ENCODE measurements at regions of chr10 and their contacts with region 1.

Region 1: GRCh38 chr10:84328418-84329195 is at the start of gene CCSER2:
- DNase-seq: peak; percentile 48 to 99
- H3K4me3 ChIP-seq: peak within 1 kb of the TSS; percentile 77
- H3K27ac ChIP-seq: peak within 1 kb of the TSS; percentile 51
- H3K4me1 ChIP-seq: peaks cover 15% of the 10 kb centered on the region
- H3K27me3 ChIP-seq: no peaks in the 10 kb centered on the region
- CTCF ChIP-seq: no peak
- total RNA-seq, gene CCSER2: 42.2 and 56.6 TPM in 2 replicates

Region 2: DNA sequence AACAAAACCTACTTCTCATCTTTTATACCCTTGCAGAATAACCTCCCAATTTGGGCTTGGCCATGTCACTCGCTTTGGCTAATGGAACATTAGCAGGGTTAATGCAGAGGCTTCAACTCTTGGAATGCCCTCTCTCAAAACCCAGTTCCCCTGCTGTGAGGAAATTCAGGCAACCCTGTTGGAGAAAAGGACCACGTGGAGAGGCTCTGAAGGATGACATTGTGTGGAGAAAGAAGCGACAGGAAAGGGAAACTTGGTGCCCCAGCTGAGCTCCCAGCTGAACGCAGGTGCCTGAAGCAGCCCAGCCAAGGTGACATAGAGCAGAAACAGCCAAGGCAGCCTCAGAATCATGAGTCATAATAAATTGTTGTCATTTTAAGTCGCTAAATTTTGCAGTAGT is 403.5 kb before region 1 on chr10:
- CTCF ChIA-PET with region 1: no interaction called
- POLR2A ChIA-PET with region 1: no interaction called
- intact Hi-C with region 1: no loop called
- DNase-seq: no peak
- H3K4me3 ChIP-seq: no peak overlapping the region
- H3K27ac ChIP-seq: no peak overlapping the region
- H3K4me1 ChIP-seq: no peaks in the 10 kb centered on the region
- H3K27me3 ChIP-seq: peaks cover 8% of the 10 kb centered on the region; the same call in 1 of the 2 replicates
- CTCF ChIP-seq: no peak

Region 3: DNA sequence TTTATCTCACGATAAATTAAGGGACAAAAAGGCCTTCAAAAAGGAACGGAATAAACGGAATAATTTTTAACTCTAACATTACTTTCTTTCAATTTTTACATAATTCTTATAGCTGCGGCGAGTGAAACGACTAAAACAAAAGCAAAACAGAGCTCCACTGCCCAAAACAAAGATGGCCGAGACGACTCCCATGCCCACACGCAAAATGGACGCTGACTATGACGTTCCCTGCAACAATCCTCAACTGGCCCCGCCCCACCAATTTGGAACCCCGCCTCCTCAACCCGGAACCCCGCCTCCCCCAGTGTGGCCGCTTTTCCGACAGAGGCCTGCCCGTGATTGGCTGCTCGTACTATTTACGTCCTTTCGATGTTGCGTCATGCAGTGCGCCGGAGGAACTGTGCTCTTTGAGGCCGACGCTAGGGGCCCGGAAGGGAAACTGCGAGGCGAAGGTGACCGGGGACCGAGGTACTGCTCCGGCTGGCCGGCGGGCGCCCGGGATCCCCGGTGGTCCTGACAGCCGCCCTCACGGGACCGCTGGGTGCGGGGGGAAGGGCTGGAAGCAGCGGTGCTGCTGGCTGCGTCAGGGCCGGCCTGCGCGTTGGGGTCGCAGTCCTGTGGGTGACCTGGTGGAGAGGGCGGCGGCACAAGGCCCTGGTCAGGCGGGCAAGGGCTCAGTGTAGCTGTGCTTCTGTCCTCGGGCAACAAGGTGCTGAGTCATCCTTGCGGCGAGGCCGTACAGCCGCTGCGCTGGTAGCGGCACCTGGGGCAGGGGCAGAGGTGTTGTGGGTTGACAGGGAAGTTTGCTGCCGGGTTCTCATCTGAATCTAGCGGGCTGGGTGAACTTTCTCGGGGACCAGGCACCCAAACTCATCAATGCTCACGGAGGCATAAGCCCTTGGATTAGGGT is 189.2 kb before region 1 on chr10 and contains the start of gene GHITM:
- CTCF ChIA-PET with region 1: no interaction called
- POLR2A ChIA-PET with region 1: no interaction called
- intact Hi-C with region 1: loop called (anchors 2 kb)
- DNase-seq: peak; percentile 96 to 100
- H3K4me3 ChIP-seq: peak within 1 kb of the TSS; percentile 94
- H3K27ac ChIP-seq: peak within 1 kb of the TSS; percentile 95
- H3K4me1 ChIP-seq: peaks cover 17% of the 10 kb centered on the region
- H3K27me3 ChIP-seq: peaks cover 11% of the 10 kb centered on the region; the same call in 1 of the 2 replicates
- CTCF ChIP-seq: peak; percentile 36; the same call in 1 of the 2 replicates
- total RNA-seq, gene GHITM: 268 and 291 TPM in 2 replicates

Region 4: GRCh38 chr10:84308481-84309304 is 19.9 kb before region 1 on chr10:
- CTCF ChIA-PET with region 1: no interaction called
- POLR2A ChIA-PET with region 1: no interaction called
- intact Hi-C with region 1: loop called (anchors 1 kb)
- DNase-seq: peak in 1 of 2 experiments; percentile 72
- H3K4me3 ChIP-seq: no peak overlapping the region
- H3K27ac ChIP-seq: no peak overlapping the region
- H3K4me1 ChIP-seq: peaks cover 10% of the 10 kb centered on the region
- H3K27me3 ChIP-seq: no peaks in the 10 kb centered on the region
- CTCF ChIP-seq: no peak

Region 5: DNA sequence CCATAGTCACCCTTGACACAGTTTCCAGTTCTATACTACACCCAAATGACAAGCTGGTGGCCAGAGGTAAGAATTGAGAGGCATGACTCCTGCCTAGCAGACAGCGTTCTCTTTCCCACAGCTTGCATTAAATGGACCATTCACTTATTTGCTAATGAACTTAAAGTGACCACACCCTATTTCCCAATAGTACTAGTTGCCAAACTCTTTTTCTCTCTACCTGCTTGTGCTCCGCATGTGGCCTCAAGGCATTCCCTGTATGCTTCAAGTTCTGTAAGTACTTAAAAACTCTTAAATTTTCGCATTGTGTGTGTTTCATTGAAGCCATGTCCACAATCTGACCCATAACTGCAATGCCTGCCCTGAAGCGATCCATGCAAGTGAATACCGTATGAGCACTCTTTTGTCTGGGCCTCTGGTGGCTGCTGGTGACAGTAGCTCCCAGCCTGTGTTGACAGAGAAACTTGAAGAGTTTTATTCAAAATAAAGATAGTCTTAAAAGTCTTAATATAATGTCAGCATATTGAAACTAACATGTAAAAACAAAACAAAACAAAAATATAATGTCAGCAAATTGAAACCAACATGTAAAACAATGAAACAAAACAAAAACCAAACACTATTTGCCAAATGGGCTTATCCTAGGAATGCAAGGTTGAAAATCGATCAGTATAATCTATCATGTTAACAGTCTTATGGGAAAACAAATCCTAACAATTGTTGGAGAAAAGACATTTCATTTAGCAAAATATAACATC is 73.4 kb after region 1 on chr10:
- CTCF ChIA-PET with region 1: no interaction called
- POLR2A ChIA-PET with region 1: no interaction called
- intact Hi-C with region 1: no loop called
- DNase-seq: peak in 1 of 2 experiments; percentile 91
- H3K4me3 ChIP-seq: no peak overlapping the region
- H3K27ac ChIP-seq: peak overlapping the region; percentile 16; the same call in 1 of the 2 replicates
- H3K4me1 ChIP-seq: peaks cover 17% of the 10 kb centered on the region
- H3K27me3 ChIP-seq: no peaks in the 10 kb centered on the region
- CTCF ChIP-seq: no peak